IMR-90 (cell line): ENCODE measurements at regions of chr19 and their contacts with region 1.

Region 1: DNA sequence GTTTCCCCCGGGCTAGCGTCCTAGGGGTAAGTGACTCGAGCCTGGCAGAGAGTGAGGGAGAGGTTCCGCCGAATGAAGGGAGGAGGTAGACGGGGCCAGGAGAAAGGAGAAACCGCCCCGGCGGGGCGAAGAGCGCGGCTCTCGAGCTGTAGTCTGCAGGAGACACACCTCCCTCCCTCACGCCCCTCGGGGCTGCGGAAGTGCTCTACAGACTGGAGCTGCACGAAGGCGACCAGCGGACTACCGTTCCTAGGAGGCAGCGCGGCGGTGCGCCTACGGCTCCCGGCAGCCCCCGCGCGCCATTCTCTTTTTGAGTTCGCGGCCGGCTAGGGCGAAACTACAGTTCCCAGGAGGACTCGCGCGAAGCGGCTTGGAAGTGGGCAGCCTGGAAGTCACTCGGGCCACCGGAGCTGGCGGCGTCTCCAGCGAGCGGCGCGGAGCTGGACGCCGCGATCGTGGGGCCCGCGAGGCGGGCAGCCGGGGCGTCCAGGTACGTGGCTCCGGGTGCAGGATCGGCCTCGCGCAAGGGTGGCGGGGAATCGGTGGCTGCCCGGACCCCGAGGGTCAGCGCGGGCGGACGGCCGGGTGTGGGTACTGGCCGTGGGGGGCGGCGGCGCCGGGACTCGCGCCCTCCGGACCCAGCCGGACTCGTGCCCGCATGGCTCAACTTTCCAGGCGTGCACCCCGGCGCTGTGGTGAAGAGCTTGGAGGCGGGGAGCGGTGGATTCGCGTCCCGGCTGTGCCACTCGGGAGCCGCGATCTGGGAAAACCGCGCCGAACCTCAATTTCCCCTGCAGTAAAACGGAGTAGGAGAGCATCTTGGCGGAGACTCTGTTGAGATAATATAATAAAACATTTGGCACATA is at the start of gene SIPA1L3:
- DNase-seq: peak; percentile 94
- ATAC-seq: peak; percentile 96
- H3K4me3 ChIP-seq: peak within 1 kb of the TSS; percentile 84
- H3K27ac ChIP-seq: peak within 1 kb of the TSS; percentile 69
- H3K4me1 ChIP-seq: peaks cover 5% of the 10 kb centered on the region; the same call in 1 of the 2 replicates
- H3K27me3 ChIP-seq: no peaks in the 10 kb centered on the region
- CTCF ChIP-seq: 0 out of 2 replicates have a peak, but pooled peaks have one; percentile 5
- POLR2A ChIP-seq: peak; percentile 91
- RAD21 ChIP-seq: 0 out of 2 replicates have a peak, but pooled peaks have one; percentile 19
- total RNA-seq, gene SIPA1L3: 4.1 and 8.3 TPM in 2 replicates

Region 2: DNA sequence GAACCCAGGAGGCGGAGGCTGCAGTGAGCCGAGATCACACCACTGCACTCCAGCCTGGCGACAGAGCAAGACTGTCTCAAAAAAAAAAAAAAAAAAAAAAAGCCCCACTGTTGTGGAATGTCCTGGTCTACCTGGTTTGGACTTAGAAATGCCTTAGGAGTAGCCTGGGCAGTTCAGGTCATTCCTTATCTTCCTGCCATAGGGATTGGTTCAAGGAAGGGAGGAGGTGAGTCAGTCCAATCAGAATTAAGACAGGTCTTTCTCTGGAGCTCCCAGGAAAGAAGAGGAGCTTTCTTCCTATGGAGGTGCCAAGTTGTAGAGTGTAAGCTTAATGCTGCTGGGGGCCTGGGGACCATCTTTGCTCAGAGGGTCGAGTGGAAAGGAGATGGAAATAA is 44.7 kb after region 1 on chr19:
- CTCF ChIA-PET with region 1: no interaction called
- POLR2A ChIA-PET with region 1: no interaction called
- dilution Hi-C with region 1: no loop called
- in situ Hi-C with region 1: no loop called
- intact Hi-C with region 1: loop called (anchors 1 kb)
- DNase-seq: no peak
- ATAC-seq: no peak
- H3K4me3 ChIP-seq: no peak overlapping the region
- H3K27ac ChIP-seq: no peak overlapping the region
- H3K4me1 ChIP-seq: peaks cover 5% of the 10 kb centered on the region
- H3K27me3 ChIP-seq: no peaks in the 10 kb centered on the region
- CTCF ChIP-seq: no peak
- POLR2A ChIP-seq: no peak
- RAD21 ChIP-seq: no peak

Region 3: DNA sequence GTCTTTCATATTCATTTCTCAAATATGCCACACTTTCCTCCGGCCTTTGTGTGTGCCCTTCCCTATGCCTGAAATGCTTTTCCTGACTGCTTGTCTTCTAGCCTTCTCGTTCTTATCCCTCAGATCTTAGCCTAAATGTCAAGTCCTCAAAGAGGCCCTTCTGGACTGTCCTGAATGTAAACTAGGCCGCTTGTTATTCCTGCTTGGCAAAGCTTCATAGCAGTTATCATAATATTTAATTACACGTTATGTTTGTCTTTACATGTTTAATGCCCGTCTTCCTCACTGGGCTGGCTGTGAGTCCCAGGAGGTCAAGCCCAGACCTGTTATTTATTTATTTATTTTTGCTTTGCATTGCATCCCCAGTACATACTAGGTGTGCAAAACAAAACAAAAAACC is 62.6 kb after region 1 on chr19:
- CTCF ChIA-PET with region 1: no interaction called
- POLR2A ChIA-PET with region 1: no interaction called
- dilution Hi-C with region 1: no loop called
- in situ Hi-C with region 1: no loop called
- intact Hi-C with region 1: no loop called
- DNase-seq: no peak
- ATAC-seq: no peak
- H3K4me3 ChIP-seq: no peak overlapping the region
- H3K27ac ChIP-seq: no peak overlapping the region
- H3K4me1 ChIP-seq: peaks cover 10% of the 10 kb centered on the region
- H3K27me3 ChIP-seq: no peaks in the 10 kb centered on the region
- CTCF ChIP-seq: no peak
- POLR2A ChIP-seq: no peak
- RAD21 ChIP-seq: no peak

Region 4: GRCh38 chr19:38095411-38096308 is 188.6 kb after region 1 on chr19:
- CTCF ChIA-PET with region 1: interaction called, 5 read pairs
- POLR2A ChIA-PET with region 1: no interaction called
- dilution Hi-C with region 1: no loop called
- in situ Hi-C with region 1: loop called (anchors 5 kb)
- intact Hi-C with region 1: loop called (anchors 1 kb)
- DNase-seq: peak; percentile 71
- ATAC-seq: peak; percentile 96
- H3K4me3 ChIP-seq: no peak overlapping the region
- H3K27ac ChIP-seq: no peak overlapping the region
- H3K4me1 ChIP-seq: no peaks in the 10 kb centered on the region
- H3K27me3 ChIP-seq: no peaks in the 10 kb centered on the region
- CTCF ChIP-seq: peak; percentile 72
- POLR2A ChIP-seq: no peak
- RAD21 ChIP-seq: peak; percentile 59

Region 5: DNA sequence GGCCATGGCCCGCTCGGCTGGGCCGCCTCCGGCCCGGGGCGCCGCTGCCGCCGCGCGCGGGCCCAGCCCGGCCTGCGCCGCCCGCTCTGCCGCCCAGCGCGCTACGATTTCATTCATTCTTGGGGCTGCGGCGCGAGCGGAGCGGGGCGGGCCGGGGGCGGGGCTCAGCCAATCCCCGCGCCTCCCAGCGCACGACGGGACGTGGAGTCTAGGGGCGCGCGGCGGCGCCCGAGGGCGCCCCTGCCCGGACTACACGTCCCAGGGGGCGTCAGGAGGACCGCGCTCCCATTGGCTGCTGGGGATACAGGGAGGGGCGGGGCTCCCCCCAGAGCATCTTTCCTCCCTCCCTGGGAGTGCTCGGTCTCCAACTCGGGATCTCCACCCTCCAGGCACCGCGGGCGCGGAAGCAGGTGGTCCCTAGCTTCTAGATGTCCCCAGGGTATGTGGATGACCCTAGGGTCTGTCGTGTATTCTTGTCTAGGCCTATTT is 322.5 kb after region 1 on chr19:
- CTCF ChIA-PET with region 1: interaction called, 3 read pairs
- POLR2A ChIA-PET with region 1: no interaction called
- dilution Hi-C with region 1: no loop called
- in situ Hi-C with region 1: loop called (anchors 5 kb)
- intact Hi-C with region 1: loop called (anchors 2 kb)
- DNase-seq: peak; percentile 91
- ATAC-seq: peak; percentile 98
- H3K4me3 ChIP-seq: no peak overlapping the region
- H3K27ac ChIP-seq: no peak overlapping the region
- H3K4me1 ChIP-seq: no peaks in the 10 kb centered on the region
- H3K27me3 ChIP-seq: peaks cover 3% of the 10 kb centered on the region; the same call in 1 of the 2 replicates
- CTCF ChIP-seq: no peak
- POLR2A ChIP-seq: no peak
- RAD21 ChIP-seq: no peak